Head of caudate nucleus (tissue), 42 donors: ENCODE measurements at regions of chr7 and their contacts with region 1.

Region 1: DNA sequence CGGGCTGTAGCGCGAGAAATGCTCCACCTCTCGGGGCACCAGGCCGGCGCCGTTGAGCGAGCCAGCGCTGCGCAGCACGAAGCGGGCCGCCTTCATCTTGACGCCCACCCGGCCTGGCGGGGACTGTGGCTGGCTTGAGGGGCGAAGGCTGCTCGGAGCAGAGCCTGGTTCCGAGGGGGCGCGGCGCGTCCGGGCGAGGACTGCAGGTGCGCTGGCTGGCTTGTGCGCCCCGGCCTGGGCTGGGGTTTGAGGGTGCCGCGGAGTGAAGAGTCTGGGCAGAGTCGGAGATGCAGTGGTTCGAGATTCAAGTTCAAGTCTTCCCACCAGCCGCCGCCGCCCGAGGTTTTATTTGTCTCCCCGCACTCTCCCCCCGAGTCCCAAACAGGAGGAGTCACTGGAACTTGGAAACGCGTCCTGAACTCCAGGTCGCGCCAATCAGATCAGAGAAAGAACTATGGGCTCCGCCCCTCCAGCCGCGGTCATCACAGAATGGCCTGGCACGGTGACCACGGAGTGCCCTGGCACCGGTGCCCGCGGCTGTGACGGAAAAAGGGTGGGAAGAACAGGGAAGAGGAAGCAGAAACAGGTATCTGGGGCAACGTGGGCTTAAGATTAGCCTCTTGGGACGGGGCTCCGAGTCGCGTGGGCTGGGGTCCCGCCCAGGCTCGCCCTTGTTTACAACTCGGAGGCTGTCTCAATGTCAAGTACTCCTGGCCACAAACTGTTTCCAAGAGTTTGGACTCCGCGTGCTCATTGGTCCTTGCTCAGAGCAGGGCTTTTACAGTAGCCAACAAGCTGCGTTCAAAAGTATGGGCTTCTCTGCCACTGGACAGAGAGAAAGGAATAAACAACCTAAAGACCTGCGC is at the start of gene PDK4:
- DNase-seq: peak; percentile 83 to 98 (median 94)

Region 2: GRCh38 chr7:95316588-95316987 is 279.8 kb before region 1 on chr7:
- intact Hi-C with region 1: no loop called
- DNase-seq: no peak

Region 3: GRCh38 chr7:95545078-95545498 is 51.3 kb before region 1 on chr7:
- intact Hi-C with region 1: loop called (anchors 5 kb)
- DNase-seq: peak in 30 of 42 donors; percentile 31 to 85 (median 64)